Tibial artery (tissue), 4 donors: ENCODE measurements at regions of chr1 and their contacts with region 1.

Region 1: DNA sequence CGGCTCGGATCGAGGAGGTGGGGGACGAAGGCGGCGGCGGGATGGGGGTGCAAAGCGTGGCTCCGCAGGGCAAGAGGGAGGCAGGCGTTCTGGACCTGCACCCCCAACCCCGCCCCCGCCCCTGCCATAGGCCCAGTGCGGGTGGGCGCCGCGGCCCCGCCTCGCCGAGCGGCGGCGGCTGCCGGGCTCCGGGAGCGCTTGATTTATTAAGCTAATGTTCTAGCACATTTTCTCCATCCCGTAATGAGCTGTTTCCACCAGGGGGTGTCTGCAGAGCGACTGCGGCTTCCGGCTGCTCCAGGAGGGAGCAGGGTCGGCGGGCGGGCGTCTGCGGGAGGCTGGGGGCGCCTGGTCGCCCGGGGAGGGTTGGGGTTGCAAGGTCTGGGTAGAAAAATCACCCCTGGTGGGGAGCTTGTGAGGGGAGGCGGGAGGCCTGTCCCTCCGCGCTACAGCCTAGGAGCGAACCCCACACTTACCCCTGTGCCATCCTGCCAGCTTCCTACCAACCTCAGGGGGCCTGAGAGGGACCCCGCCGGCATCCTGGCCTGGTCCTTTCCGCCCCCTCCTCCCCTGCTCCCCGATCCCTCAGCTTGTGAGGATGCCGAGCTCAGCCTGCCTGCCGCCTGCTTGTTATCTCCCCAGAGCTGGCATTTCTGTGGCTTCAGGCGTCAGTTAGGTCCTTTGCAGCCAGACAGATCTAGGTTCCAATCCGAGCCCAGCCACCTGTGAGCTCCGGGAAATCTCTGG is 48.5 kb upstream of the ACOT11 start:
- DNase-seq: no peak
- H3K4me3 ChIP-seq: peak overlapping the region; percentile 41 to 49
- H3K27ac ChIP-seq: no peak overlapping the region
- H3K4me1 ChIP-seq: peaks cover 0 to 16% (median 14%) of the 10 kb centered on the region in 4 donors
- H3K27me3 ChIP-seq: peaks cover 0 to 46% of the 10 kb centered on the region in 2 donors
- CTCF ChIP-seq: peak; percentile 25 to 30

Region 2: GRCh38 chr1:54384911-54385726 is 114.4 kb before region 1 on chr1:
- intact Hi-C with region 1: no loop called
- DNase-seq: no peak
- H3K4me3 ChIP-seq: no peak overlapping the region
- H3K27ac ChIP-seq: peak overlapping the region; percentile 51 to 53
- H3K4me1 ChIP-seq: peaks cover 5 to 56% (median 39%) of the 10 kb centered on the region in 4 donors
- H3K27me3 ChIP-seq: no peaks in the 10 kb centered on the region
- CTCF ChIP-seq: no peak

Region 3: GRCh38 chr1:54810100-54810942 is 310.8 kb after region 1 on chr1:
- intact Hi-C with region 1: loop called (anchors 10 kb)
- DNase-seq: peak in 1 of 2 donors; percentile 39
- H3K4me3 ChIP-seq: no peak overlapping the region
- H3K27ac ChIP-seq: no peak overlapping the region
- H3K4me1 ChIP-seq: no peaks in the 10 kb centered on the region
- H3K27me3 ChIP-seq: peaks cover 0 to 13% of the 10 kb centered on the region in 2 donors
- CTCF ChIP-seq: peak; percentile 78 to 84

Region 4: GRCh38 chr1:54980528-54981241 is 481.2 kb after region 1 on chr1 and contains the start of gene TMEM61:
- intact Hi-C with region 1: no loop called
- DNase-seq: no peak
- H3K4me3 ChIP-seq: peak within 1 kb of the TSS; percentile 55 to 72
- H3K27ac ChIP-seq: peak within 1 kb of the TSS; percentile 51 to 76
- H3K4me1 ChIP-seq: peaks cover 0 to 47% (median 21%) of the 10 kb centered on the region in 4 donors
- H3K27me3 ChIP-seq: peaks cover 0 to 13% of the 10 kb centered on the region in 2 donors
- CTCF ChIP-seq: no peak